MCF 10A (cell line): ENCODE measurements at regions of chr6 and their contacts with region 1.

Region 1: GRCh38 chr6:152124429-152125074 is 317.1 kb downstream of the ESR1 start:
- DNase-seq: peak; percentile 72
- H3K4me3 Mint-ChIP-seq: no peak overlapping the region
- H3K27ac Mint-ChIP-seq: no peak overlapping the region
- H3K4me1 Mint-ChIP-seq: peaks cover under 1% of the 10 kb centered on the region
- H3K27me3 Mint-ChIP-seq: no peaks in the 10 kb centered on the region
- CTCF ChIP-seq: peak; percentile 66

Region 2: DNA sequence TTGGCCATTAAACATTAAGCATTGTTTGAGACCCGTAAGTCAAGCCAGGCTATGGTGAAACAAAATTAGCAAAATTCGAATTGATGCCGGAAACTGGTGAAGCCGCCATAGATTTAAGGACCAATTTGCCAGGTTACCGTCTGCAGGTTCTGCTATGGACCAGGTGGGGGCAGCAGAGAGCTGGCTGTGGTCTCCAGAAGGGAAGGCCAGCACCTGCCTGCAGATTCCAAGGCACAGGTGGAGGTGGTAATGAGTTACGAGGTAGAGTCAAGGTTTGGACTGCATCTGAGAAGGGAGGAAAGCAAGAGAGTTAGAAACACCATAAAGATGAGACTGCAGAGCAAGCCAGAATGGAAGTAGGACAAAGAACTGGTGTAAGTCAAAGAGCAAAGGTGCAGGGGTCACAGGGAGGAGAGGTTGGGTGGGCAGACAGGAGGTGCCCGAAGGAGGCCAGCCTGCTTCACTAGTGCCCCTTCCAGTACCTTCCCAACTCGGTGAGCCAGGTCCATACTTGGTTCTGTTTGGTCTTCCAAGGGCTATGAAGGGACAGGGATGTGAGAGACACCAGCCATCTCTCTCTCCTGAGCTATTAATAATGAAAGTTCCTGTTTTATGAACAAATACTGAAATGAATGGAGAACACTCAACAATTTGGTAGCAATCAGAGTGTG is 448.7 kb before region 1 on chr6:
- CTCF ChIA-PET with region 1: interaction called, 11 read pairs
- POLR2A ChIA-PET with region 1: no interaction called
- intact Hi-C with region 1: loop called (anchors 1 kb)
- DNase-seq: peak; percentile 71
- H3K4me3 Mint-ChIP-seq: no peak overlapping the region
- H3K27ac Mint-ChIP-seq: no peak overlapping the region
- H3K4me1 Mint-ChIP-seq: no peaks in the 10 kb centered on the region
- H3K27me3 Mint-ChIP-seq: no peaks in the 10 kb centered on the region
- CTCF ChIP-seq: peak; percentile 89

Region 3: GRCh38 chr6:151765444-151765886 is 359.1 kb before region 1 on chr6:
- CTCF ChIA-PET with region 1: interaction called, 142 read pairs
- POLR2A ChIA-PET with region 1: interaction called, 22 read pairs
- intact Hi-C with region 1: loop called (anchors 1 kb)
- DNase-seq: peak; percentile 85
- H3K4me3 Mint-ChIP-seq: no peak overlapping the region
- H3K27ac Mint-ChIP-seq: peak overlapping the region; percentile 6
- H3K4me1 Mint-ChIP-seq: peaks cover 23% of the 10 kb centered on the region
- H3K27me3 Mint-ChIP-seq: no peaks in the 10 kb centered on the region
- CTCF ChIP-seq: peak; percentile 64

Region 4: GRCh38 chr6:151958331-151958730 is 166.2 kb before region 1 on chr6:
- CTCF ChIA-PET with region 1: interaction called, 7 read pairs
- POLR2A ChIA-PET with region 1: no interaction called
- intact Hi-C with region 1: loop called (anchors 1 kb)
- DNase-seq: peak; percentile 67
- H3K4me3 Mint-ChIP-seq: no peak overlapping the region
- H3K27ac Mint-ChIP-seq: no peak overlapping the region
- H3K4me1 Mint-ChIP-seq: peaks cover 8% of the 10 kb centered on the region
- H3K27me3 Mint-ChIP-seq: no peaks in the 10 kb centered on the region
- CTCF ChIP-seq: no peak

Region 5: DNA sequence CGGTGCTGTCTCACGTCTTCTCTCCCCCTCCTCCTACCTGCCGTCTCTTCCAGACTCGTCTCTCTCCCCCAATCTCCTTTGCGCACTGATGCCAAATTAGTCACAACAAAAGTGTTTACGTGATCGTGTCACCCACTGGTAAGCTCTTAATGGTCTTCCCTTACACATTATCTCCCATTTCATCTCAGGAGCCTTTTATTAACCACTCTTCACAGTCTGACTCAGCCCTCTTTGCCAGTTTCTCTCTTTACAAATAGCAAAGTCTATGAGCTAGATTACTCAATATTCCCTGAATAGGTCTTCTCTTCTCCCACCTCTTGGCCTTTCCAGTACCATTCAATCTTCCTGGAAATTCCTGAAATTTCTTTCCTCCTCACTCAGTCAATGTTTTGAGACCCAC is 70.1 kb before region 1 on chr6:
- CTCF ChIA-PET with region 1: no interaction called
- POLR2A ChIA-PET with region 1: no interaction called
- intact Hi-C with region 1: no loop called
- DNase-seq: peak; percentile 42
- H3K4me3 Mint-ChIP-seq: no peak overlapping the region
- H3K27ac Mint-ChIP-seq: no peak overlapping the region
- H3K4me1 Mint-ChIP-seq: peaks cover 5% of the 10 kb centered on the region
- H3K27me3 Mint-ChIP-seq: no peaks in the 10 kb centered on the region
- CTCF ChIP-seq: no peak

Region 6: GRCh38 chr6:152100183-152100618 is 24.4 kb before region 1 on chr6:
- CTCF ChIA-PET with region 1: interaction called, 13 read pairs
- POLR2A ChIA-PET with region 1: interaction called, 5 read pairs
- intact Hi-C with region 1: no loop called
- DNase-seq: peak; percentile 56
- H3K4me3 Mint-ChIP-seq: no peak overlapping the region
- H3K27ac Mint-ChIP-seq: no peak overlapping the region
- H3K4me1 Mint-ChIP-seq: peaks cover 29% of the 10 kb centered on the region
- H3K27me3 Mint-ChIP-seq: no peaks in the 10 kb centered on the region
- CTCF ChIP-seq: no peak

Region 7: GRCh38 chr6:152176268-152176667 is 51.7 kb after region 1 on chr6:
- CTCF ChIA-PET with region 1: no interaction called
- POLR2A ChIA-PET with region 1: no interaction called
- intact Hi-C with region 1: no loop called
- DNase-seq: no peak
- H3K4me3 Mint-ChIP-seq: no peak overlapping the region
- H3K27ac Mint-ChIP-seq: no peak overlapping the region
- H3K4me1 Mint-ChIP-seq: no peaks in the 10 kb centered on the region
- H3K27me3 Mint-ChIP-seq: no peaks in the 10 kb centered on the region
- CTCF ChIP-seq: no peak

Region 8: GRCh38 chr6:152195896-152196295 is 71.3 kb after region 1 on chr6:
- CTCF ChIA-PET with region 1: no interaction called
- POLR2A ChIA-PET with region 1: no interaction called
- intact Hi-C with region 1: no loop called
- DNase-seq: no peak
- H3K4me3 Mint-ChIP-seq: no peak overlapping the region
- H3K27ac Mint-ChIP-seq: no peak overlapping the region
- H3K4me1 Mint-ChIP-seq: no peaks in the 10 kb centered on the region
- H3K27me3 Mint-ChIP-seq: no peaks in the 10 kb centered on the region
- CTCF ChIP-seq: no peak